ENCODE measurements at regions of chr9 and their contacts with region 1.

Region 1: DNA sequence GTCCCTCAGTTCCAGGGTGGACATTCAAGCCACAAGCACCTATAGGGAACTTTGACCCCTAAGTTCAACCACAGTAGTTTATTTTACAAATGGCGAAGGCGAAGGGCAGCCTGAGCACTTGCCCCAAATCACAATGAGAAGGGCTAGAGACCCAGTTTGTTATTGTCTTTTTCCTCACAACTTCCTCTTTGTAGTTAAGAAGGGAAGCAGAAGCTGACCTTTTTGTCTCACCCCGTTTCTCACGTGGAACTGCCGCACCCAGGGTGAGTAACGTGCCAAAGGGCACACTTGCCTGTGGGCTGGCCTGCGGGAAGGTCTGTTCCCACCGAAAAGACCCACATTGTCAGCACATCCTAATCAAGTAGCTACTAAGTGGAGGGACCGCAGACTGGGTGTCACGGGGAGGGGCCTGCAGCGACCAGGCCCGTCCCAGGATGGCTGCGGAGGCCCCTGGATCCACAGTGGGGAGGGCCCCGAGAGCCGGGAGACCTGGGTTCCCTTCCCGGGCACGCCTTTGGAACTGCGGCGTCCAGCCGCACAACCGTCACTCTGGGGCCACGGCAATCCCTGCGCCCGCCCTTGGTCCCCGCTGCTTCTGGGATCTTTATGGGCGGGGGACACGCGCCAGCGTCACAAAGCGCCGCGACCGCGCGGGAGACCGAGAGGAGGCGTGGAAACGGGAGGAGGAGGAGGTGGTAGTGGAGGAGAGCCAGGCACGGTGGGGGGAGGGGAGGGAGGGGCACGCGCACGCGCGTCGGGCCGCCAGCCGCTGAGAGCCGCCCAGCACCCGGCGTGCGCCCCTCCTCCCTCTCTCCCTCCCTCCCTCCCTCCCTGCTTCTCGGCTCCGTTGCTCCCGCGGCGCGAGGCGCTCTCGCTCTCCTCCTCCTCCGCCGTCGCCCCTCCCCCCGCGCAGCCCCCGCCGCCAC is at the start of gene UBE2R2:
- DNase-seq: no peak
- H3K4me3 ChIP-seq: peak within 1 kb of the TSS; percentile 89
- CTCF ChIP-seq: no peak

Region 2: DNA sequence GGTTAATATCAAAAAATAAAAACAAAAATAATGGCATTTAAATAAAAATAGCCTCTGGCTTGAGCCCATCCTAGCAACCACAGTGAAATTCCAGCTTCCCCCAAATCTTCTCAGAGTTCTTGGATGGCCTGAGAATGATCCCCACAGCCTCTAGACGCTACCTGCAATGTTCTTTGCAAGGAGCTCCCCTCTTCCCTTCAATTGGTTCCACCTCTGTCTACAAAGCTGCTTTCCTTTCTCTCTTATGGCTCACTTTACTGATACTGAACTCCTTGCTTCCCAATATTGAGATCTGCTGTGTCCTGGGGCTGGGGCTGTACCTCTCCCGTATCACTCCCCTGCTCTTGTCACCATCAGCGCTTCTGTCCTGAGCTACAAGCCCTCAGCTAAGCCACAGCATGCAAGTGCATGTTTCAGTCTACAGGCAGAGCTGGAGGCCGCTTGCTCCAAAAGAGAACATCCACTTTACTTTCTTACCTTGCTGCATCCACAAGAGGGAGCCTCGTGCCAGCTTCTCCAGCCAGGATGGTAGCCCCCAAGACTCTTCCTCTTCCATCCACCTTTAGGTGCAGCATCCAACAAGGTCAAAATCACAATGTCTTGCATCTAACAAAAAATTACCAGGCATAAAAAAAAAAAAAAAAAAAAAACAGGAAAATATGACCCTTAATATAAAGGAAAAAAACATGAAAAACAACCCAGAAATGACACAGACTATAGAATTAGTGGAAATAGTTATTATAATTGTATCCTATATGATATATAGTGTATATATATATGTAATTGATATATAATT is 78.6 kb before region 1 on chr9:
- CTCF ChIA-PET with region 1: interaction called, 16 read pairs
- POLR2A ChIA-PET with region 1: no interaction called
- DNase-seq: peak; percentile 14
- H3K4me3 ChIP-seq: no peak overlapping the region
- CTCF ChIP-seq: peak; percentile 79

Region 3: GRCh38 chr9:33752130-33752637 is 64.4 kb before region 1 on chr9:
- CTCF ChIA-PET with region 1: no interaction called
- POLR2A ChIA-PET with region 1: no interaction called
- DNase-seq: no peak
- H3K4me3 ChIP-seq: no peak overlapping the region
- CTCF ChIP-seq: no peak

Region 4: GRCh38 chr9:33791117-33791516 is 25.5 kb before region 1 on chr9:
- CTCF ChIA-PET with region 1: interaction called, 24 read pairs
- POLR2A ChIA-PET with region 1: no interaction called
- DNase-seq: no peak
- H3K4me3 ChIP-seq: no peak overlapping the region
- CTCF ChIP-seq: no peak

Region 5: DNA sequence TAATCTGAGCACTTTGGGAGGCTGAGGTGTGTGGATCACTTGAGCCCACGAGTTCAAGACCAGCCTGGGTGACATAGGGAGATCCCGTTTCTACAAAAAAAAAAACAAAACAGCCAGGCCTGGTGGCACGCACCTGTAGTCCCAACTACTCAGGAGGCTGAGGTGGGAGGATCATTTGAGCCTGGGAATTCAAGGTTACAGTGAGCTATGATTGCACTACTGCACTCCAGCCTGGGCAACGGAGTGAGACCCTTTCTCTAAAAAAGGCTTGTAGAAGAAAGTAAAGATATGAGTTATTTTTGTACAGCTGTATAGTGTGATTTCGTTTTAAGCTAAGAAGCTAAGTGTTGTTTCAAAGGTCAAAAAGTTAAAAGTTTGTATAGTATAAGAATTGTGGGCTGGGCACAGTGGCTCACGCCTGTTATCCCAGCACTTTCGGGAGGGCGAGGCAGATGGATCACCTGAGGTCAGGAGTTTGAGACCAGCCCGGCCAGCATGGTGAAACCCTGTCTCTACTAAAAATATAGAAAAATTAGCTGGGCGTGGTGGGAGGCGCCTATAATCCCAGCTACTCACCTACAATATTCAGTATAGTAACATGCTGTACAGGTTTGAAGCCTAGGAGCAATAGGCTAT is 19.2 kb after region 1 on chr9:
- CTCF ChIA-PET with region 1: interaction called, 29 read pairs
- POLR2A ChIA-PET with region 1: no interaction called
- DNase-seq: no peak
- H3K4me3 ChIP-seq: no peak overlapping the region
- CTCF ChIP-seq: no peak

Region 6: GRCh38 chr9:33852216-33852826 is 35.7 kb after region 1 on chr9:
- CTCF ChIA-PET with region 1: interaction called, 36 read pairs
- POLR2A ChIA-PET with region 1: interaction called, 3 read pairs
- DNase-seq: no peak
- H3K4me3 ChIP-seq: no peak overlapping the region
- CTCF ChIP-seq: peak; percentile 22

Region 7: GRCh38 chr9:33924978-33925797 is 108.6 kb after region 1 on chr9:
- CTCF ChIA-PET with region 1: interaction called, 19 read pairs
- POLR2A ChIA-PET with region 1: interaction called, 3 read pairs
- DNase-seq: no peak
- H3K4me3 ChIP-seq: no peak overlapping the region
- CTCF ChIP-seq: peak; percentile 67

Region 8: GRCh38 chr9:34072868-34073590 is 256.4 kb after region 1 on chr9:
- CTCF ChIA-PET with region 1: interaction called, 28 read pairs
- POLR2A ChIA-PET with region 1: no interaction called
- DNase-seq: peak; percentile 44
- H3K4me3 ChIP-seq: no peak overlapping the region
- CTCF ChIP-seq: no peak

Region 9: GRCh38 chr9:34620061-34620994 is 803.7 kb after region 1 on chr9 and contains the start of gene DCTN3:
- CTCF ChIA-PET with region 1: no interaction called
- POLR2A ChIA-PET with region 1: no interaction called
- DNase-seq: peak; percentile 75
- H3K4me3 ChIP-seq: peak within 1 kb of the TSS; percentile 92
- CTCF ChIP-seq: no peak